Activated CD8-positive, alpha-beta memory T cell treated with anti-CD3 and anti-CD28 coated beads, Interleukin-2, amount 10 ng/mL, durations not matched to agents 7 days and 5 days (primary cell): ENCODE measurements at regions of chr10 and their contacts with region 1.

Region 1: DNA sequence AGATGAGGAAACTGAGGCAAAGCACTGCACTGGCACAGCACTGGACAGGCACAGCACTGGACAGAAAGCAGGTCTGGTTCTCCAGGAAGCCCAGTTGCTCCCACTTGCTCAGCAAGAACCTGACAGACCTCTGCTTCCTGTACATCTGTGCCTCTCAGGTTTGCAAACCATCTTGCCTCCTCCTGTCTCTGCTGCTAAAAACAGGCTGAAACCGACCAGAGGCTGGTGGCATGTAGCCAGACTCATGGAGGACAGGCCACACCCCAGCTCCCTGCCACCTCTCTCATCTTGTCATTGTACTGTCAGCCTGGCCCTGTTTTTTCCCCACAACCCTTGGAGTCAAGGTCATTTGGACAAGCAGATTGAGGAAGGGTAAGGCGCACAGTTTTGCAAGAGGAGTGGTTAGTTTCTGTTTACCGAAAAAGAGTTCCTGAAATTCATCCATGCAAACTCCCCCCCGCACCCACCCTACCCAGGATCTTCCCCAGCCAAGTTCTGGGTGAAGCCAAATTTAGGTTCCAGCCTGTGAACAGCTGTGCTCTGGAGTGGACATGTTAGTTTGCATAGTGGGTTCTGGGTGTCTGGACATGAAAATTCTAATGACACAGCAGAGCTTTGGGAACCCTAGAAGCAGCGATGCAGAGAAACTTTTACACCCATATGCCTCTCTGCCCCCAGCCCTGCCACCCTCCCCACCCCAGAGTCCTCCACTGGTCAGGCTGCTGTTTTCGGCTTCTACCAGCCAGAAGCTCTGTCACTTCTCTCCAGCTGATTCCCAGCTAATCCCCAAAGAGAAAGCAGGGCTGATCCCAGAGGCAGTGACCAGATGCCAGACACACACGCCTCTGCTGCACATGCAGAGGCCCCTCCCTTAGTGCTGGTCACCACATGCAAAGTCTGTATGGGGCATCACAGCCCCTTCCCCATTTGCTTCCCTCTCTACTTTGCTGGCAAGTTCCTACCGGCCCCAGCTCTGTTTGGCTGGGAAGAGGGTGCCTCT is 8.5 kb upstream of the C10orf105 start:
- DNase-seq: peak; percentile 86
- ATAC-seq: peak; percentile 57
- H3K4me3 Mint-ChIP-seq: peak overlapping the region; percentile 11
- H3K27ac Mint-ChIP-seq: peak overlapping the region; percentile 96
- H3K4me1 Mint-ChIP-seq: peaks cover 85% of the 10 kb centered on the region
- H3K27me3 Mint-ChIP-seq: no peaks in the 10 kb centered on the region

Region 2: DNA sequence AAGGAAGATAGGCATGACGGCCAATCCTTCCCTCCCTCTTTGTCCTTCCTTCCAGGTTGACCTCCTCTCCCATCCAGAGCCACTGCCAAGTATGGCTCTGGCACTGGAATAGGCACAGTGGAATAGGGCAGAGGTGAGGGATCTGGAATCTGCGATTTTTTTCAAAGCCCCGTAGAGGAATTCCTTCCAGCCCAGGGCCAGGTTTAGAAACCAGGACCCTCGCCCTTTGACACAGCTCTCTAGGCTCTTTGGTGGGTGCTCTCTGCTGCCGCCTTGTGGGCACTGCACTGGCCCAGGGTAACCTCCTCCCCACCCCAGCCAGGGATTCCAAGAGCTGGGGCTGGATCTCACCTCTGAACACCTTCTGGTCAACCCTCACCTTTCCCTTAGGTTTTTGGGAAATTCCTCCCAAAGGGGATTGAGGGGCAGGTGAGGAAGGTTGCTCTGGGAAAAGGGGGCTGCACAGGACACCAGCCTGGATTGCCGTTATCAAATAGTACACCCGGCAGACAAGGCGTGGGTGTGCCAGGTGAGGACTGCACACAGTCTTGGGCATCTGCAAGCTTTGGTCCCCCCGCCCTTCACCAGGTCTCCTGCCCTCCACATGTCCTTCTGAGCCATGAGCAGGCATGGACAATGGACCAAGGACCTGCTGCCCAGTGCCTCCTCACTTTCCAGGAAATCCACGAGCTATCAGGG is 31.3 kb before region 1 on chr10:
- CTCF ChIA-PET with region 1: interaction called, 28 read pairs
- DNase-seq: peak; percentile 75
- ATAC-seq: peak; percentile 66
- H3K4me3 Mint-ChIP-seq: no peak overlapping the region
- H3K27ac Mint-ChIP-seq: no peak overlapping the region
- H3K4me1 Mint-ChIP-seq: peaks cover 51% of the 10 kb centered on the region
- H3K27me3 Mint-ChIP-seq: peaks cover 8% of the 10 kb centered on the region

Region 3: DNA sequence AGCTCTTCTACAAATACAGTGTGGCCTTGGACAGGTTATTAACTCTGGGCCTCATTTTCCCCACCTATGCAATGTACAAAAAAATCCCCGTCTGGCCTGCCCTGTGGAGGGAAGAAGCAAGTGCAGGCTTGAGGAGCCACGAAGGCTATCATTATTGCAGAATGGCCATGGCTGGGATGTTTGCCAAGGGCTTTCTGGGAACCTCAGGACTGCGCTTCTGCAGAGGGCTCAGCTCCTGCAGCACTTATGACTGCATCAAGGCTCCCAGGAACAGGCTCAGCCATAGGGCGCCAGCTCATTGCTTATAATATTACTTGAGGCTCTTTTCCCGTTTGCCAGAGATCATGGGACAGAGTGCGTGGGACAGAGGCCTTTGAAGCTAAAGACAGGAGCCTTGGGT is 12.0 kb after region 1 on chr10:
- CTCF ChIA-PET with region 1: interaction called, 40 read pairs
- DNase-seq: no peak
- ATAC-seq: no peak
- H3K4me3 Mint-ChIP-seq: no peak overlapping the region
- H3K27ac Mint-ChIP-seq: peak overlapping the region; percentile 4
- H3K4me1 Mint-ChIP-seq: peaks cover 79% of the 10 kb centered on the region
- H3K27me3 Mint-ChIP-seq: no peaks in the 10 kb centered on the region

Region 4: GRCh38 chr10:71756311-71757191 is 28.5 kb after region 1 on chr10:
- CTCF ChIA-PET with region 1: interaction called, 17 read pairs
- DNase-seq: no peak
- ATAC-seq: peak; percentile 52
- H3K4me3 Mint-ChIP-seq: peak overlapping the region; percentile 55
- H3K27ac Mint-ChIP-seq: peak overlapping the region; percentile 88
- H3K4me1 Mint-ChIP-seq: peaks cover 69% of the 10 kb centered on the region
- H3K27me3 Mint-ChIP-seq: no peaks in the 10 kb centered on the region

Region 5: GRCh38 chr10:71771821-71772617 is 44.0 kb after region 1 on chr10:
- CTCF ChIA-PET with region 1: interaction called, 55 read pairs
- DNase-seq: no peak
- ATAC-seq: no peak
- H3K4me3 Mint-ChIP-seq: peak overlapping the region; percentile 84
- H3K27ac Mint-ChIP-seq: peak overlapping the region; percentile 90
- H3K4me1 Mint-ChIP-seq: peaks cover 83% of the 10 kb centered on the region
- H3K27me3 Mint-ChIP-seq: no peaks in the 10 kb centered on the region